OCI-LY7 (cell line): ENCODE measurements at regions of chr3 and their contacts with region 1.

Region 1: GRCh38 chr3:44338010-44338827 is at the start of gene TCAIM:
- DNase-seq: peak; percentile 98
- H3K4me3 ChIP-seq: peak within 1 kb of the TSS; percentile 82
- H3K27ac ChIP-seq: peak within 1 kb of the TSS; percentile 71
- H3K4me1 ChIP-seq: peaks cover 23% of the 10 kb centered on the region
- CTCF ChIP-seq: no peak
- total RNA-seq, gene TCAIM: 15.2 and 17.9 TPM in 2 replicates

Region 2: GRCh38 chr3:44510000-44510368 is 171.8 kb after region 1 on chr3:
- CTCF ChIA-PET with region 1: interaction called, 3 read pairs
- POLR2A ChIA-PET with region 1: no interaction called
- intact Hi-C with region 1: loop called (anchors 10 kb)
- DNase-seq: peak; percentile 59
- H3K4me3 ChIP-seq: peak overlapping the region; percentile 82
- H3K27ac ChIP-seq: peak overlapping the region; percentile 33
- H3K4me1 ChIP-seq: peaks cover 6% of the 10 kb centered on the region
- CTCF ChIP-seq: no peak

Region 3: GRCh38 chr3:44976002-44976815 is 638.0 kb after region 1 on chr3 and contains the starts of genes EXOSC7 and ZDHHC3:
- CTCF ChIA-PET with region 1: no interaction called
- POLR2A ChIA-PET with region 1: no interaction called
- intact Hi-C with region 1: loop called (anchors 10 kb)
- DNase-seq: peak; percentile 90
- H3K4me3 ChIP-seq: peak within 1 kb of the TSS; percentile 91
- H3K27ac ChIP-seq: peak within 1 kb of the TSS; percentile 57
- H3K4me1 ChIP-seq: peaks cover 26% of the 10 kb centered on the region
- CTCF ChIP-seq: no peak
- total RNA-seq, gene EXOSC7: 60.3 and 71.5 TPM in 2 replicates
- total RNA-seq, gene ZDHHC3: 50.8 and 53.1 TPM in 2 replicates